Ovary (tissue), 10 donors: ENCODE measurements at regions of chr17 and their contacts with region 1.

Region 1: DNA sequence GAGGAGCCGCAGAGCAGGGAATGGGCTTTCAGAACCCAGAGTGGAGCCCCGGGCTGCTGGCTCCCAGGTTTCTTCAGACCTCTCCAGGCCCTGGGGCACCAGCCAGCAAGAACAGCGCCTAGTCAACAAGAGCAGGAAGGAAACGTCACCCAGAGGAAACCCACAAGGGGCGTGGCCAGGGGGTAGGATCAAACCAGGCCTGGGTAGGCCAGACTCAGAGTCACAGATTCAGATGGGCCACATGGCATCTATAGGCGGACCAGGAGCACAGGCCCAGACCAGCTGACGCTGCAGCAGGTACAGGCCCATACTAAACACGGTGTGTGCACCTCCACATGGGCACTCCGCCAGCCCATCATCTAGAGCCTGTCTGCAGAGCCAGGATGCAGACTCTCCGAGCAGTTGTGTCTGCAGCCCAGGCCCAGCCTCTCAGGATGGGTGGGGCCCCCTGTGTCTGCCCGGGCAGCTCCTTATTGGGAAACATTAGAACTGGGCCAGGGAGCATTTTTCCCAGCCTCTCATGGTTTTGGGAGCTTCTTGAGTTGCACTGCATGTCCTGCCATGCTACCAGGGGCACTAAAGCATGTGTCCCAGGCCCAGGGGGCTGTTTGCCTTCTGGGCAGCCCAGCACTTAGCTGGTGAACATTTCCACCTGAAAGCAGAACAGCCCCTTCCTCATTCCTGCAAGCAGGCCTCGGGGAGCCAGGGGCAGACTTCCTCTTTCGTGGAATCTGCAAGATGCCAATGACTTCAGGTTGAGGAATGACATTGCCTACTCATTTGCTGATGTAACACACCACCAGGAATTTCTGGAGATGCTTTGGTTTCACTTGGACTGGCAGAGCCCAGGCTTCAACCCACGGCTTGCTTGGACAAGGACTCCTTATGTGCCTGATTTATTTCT is at the start of gene NLRP1:
- DNase-seq: peak; percentile 47 to 75 (median 63)
- H3K4me3 ChIP-seq: peak within 1 kb of the TSS; percentile 43
- H3K27ac ChIP-seq: peak within 1 kb of the TSS; percentile 7 to 28
- H3K4me1 ChIP-seq: no peaks in the 10 kb centered on the region
- H3K27me3 ChIP-seq: no peaks in the 10 kb centered on the region
- CTCF ChIP-seq: no peak
- EP300 ChIP-seq: no peak
- POLR2A ChIP-seq: no peak
- total RNA-seq, gene NLRP1: 43.7 to 75.9 (median 64.5) TPM

Region 2: DNA sequence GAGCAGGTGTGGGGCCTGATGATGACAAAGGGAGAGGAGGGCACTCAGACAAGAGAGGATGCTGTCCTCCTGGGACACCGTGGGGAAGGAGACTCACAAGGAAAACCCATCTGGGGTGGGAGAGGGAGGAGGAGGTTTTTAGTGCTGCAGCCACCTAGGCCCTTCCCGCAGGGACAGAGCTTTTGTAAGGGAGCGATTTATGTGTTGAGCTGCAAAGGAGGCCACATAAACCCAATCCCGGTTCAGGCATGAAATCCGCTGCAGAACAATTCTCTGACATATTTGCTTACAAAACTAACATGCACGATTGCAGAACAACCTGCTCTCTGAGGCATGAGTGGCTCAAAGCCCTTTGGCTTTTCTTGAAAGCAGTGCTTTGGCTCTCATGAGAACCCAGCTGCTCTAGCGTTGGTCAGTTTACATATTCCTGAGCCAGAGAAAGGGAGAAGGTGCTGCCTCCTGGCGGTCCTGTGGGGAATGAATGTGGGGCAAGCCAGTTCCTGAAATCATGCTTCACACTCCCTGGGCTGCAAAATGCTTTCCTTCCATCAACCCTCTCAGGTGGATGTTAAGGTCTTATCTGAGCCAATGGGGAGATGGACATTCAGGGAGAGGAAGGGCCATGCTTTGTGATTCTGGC is 122.1 kb after region 1 on chr17:
- intact Hi-C with region 1: loop called in 1 of 4 experiments (anchors 5 kb)
- DNase-seq: peak; percentile 43 to 75 (median 51)
- H3K4me3 ChIP-seq: no peak overlapping the region
- H3K27ac ChIP-seq: no peak overlapping the region
- H3K4me1 ChIP-seq: no peaks in the 10 kb centered on the region
- H3K27me3 ChIP-seq: no peaks in the 10 kb centered on the region
- CTCF ChIP-seq: peak in 1 of 3 donors; percentile 14
- EP300 ChIP-seq: no peak
- POLR2A ChIP-seq: no peak

Region 3: DNA sequence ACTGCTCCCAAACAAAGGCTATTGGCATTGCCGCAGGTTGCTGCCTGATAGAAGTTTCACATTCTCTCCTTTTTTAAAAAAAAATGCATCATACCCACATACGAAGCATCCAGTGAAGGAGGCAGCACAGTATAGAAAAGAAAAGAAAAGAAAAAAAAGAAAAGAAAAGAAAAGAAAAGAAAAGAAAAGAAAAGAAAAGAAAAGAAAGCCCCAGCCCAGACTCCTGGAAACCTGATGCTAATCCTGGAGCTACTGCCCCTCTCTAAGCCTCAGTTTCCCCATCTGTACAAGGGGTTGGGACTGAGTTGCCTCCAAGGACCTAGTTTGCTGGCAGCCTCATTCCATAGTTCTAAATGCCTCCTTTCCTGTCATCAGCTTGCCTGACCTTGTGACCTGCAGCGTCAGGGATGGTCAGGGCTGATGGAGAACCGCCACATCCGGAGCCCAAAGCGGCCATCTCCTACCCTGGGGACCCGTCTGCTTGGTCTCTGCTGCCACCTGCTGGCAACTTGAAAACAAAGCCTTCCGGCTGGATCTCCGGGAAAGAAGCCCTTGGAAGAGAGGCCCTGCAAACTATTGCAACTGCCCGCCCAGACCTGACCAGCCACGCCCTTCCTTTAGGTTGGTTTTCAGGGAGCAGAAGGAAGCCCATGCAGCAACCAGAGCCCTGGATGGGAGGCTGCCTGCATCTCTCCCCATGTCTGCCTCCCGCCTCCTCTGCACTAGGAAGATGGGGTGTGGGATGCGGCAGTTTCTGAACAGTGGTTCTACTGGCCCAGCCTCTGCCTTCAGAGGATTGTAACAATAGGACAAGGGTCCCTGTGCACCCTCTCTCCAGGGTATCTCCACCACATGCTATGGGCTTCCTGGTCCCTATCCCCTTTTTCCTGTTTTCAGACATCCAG is 837.3 kb after region 1 on chr17:
- intact Hi-C with region 1: loop called in 1 of 4 experiments (anchors 5 kb)
- DNase-seq: peak; percentile 50 to 81 (median 78)
- H3K4me3 ChIP-seq: no peak overlapping the region
- H3K27ac ChIP-seq: no peak overlapping the region
- H3K4me1 ChIP-seq: no peaks in the 10 kb centered on the region
- H3K27me3 ChIP-seq: no peaks in the 10 kb centered on the region
- CTCF ChIP-seq: peak; percentile 58 to 71 (median 61)
- EP300 ChIP-seq: no peak
- POLR2A ChIP-seq: no peak